ENCODE measurements at regions of chr1 and their contacts with region 1.

Region 1: GRCh38 chr1:150162862-150163706 is 13.4 kb downstream of the PLEKHO1 start:
- H3K4me3 Mint-ChIP-seq: peak overlapping the region; percentile 80
- H3K27ac Mint-ChIP-seq: peak overlapping the region; percentile 92
- H3K4me1 Mint-ChIP-seq: peaks cover 86% of the 10 kb centered on the region
- H3K27me3 Mint-ChIP-seq: no peaks in the 10 kb centered on the region

Region 2: DNA sequence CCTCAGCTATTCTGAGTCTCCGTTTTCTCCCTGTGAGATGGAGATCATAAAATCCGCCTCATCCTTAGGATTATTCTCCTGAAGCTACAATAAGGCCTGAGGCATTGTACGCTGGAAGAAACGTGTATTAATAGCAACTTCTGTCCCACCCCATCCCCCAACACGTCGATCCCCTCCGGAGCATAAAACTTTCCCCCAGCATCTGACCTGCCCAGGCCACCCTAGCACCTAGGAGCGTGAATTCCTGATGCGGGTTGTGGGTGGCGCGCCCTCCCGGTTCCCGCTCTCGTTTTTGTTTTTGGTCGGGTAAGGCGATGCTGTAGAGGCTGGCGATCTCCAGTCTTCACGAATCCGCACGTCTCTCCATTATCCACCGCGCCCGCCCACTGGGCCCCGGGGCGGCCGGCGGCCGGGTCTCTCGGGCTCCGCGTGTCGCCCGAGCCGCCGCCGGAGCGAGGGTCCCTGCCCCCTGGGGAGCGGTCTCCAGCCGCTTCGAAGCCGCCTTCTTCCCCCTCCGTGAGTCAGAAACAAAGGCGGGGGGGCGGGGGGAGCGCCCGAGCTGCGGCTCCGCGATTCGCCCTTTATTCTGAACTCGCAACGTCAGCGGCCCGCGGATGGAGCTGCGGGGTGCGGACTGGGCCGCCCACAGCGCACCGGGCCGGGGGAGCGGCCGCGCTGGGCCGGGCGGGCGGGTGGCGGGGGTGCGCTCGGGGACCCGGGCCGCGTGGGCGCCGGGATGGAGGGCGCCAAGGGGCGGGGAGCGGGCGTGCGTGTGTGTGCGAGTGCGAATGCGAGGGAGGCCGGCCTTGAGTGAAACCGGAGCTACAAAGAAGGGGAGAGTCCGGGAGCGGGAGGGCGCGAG is 13.6 kb before region 1 on chr1 and contains the start of gene PLEKHO1:
- intact Hi-C with region 1: loop called (anchors 1 kb)
- H3K4me3 Mint-ChIP-seq: peak within 1 kb of the TSS; percentile 97
- H3K27ac Mint-ChIP-seq: peak within 1 kb of the TSS; percentile 92
- H3K4me1 Mint-ChIP-seq: peaks cover 68% of the 10 kb centered on the region
- H3K27me3 Mint-ChIP-seq: peaks cover 2% of the 10 kb centered on the region

Region 3: DNA sequence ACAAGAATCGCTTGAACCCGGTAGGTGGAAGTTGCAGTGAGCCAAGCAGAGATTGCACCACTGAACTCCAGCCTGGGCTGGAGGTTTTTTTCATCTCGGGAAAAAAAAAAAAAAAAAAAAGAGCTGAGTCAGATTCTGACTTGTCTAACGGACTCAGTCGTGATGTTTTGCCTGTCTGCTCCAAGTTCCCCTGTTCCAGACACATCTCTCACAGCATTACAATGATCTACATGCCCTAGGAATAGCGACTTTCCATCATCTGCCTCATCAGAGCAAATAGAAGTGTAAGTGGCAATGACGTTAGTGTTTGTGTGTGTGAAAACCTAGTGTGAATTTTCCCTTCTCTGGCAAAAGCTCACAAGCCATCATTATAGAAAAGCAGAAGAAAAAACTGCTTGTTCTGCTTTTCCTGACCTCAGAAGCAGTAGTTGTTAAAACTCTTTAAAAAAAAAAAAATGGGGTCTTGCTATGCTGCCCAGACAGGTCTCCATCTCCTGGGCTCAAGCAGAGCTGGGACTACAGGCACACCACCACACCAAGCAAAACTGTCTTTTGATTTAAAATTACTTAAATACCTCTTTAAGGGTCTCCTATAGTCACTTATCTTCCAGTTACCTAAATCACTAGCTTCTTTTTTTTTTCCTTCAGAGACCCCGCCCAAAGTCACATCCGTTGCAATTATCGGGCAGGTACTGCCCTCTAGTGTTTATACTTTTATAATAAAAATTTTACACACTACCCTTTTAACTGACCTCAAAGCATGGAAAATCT is 23.9 kb after region 1 on chr1:
- intact Hi-C with region 1: loop called (anchors 2 kb)
- H3K4me3 Mint-ChIP-seq: peak overlapping the region; percentile 59
- H3K27ac Mint-ChIP-seq: peak overlapping the region; percentile 92
- H3K4me1 Mint-ChIP-seq: peaks cover 41% of the 10 kb centered on the region
- H3K27me3 Mint-ChIP-seq: no peaks in the 10 kb centered on the region

Region 4: GRCh38 chr1:150235852-150236613 is 72.9 kb after region 1 on chr1 and contains the start of gene ANP32E:
- intact Hi-C with region 1: loop called (anchors 10 kb)
- H3K4me3 Mint-ChIP-seq: no peak within 1 kb of the TSS
- H3K27ac Mint-ChIP-seq: no peak within 1 kb of the TSS
- H3K4me1 Mint-ChIP-seq: peaks cover 17% of the 10 kb centered on the region
- H3K27me3 Mint-ChIP-seq: peaks cover 1% of the 10 kb centered on the region

Measured in dendritic cell treated with granulocyte-macrophage colony-stimulating factor and Interleukin-4, amounts not matched to agents 40 ng/mL and 50 ng/mL, for 4 days (primary cell).